Colonic mucosa (tissue), 4 donors: ENCODE measurements at regions of chr11 and their contacts with region 1.

Region 1: DNA sequence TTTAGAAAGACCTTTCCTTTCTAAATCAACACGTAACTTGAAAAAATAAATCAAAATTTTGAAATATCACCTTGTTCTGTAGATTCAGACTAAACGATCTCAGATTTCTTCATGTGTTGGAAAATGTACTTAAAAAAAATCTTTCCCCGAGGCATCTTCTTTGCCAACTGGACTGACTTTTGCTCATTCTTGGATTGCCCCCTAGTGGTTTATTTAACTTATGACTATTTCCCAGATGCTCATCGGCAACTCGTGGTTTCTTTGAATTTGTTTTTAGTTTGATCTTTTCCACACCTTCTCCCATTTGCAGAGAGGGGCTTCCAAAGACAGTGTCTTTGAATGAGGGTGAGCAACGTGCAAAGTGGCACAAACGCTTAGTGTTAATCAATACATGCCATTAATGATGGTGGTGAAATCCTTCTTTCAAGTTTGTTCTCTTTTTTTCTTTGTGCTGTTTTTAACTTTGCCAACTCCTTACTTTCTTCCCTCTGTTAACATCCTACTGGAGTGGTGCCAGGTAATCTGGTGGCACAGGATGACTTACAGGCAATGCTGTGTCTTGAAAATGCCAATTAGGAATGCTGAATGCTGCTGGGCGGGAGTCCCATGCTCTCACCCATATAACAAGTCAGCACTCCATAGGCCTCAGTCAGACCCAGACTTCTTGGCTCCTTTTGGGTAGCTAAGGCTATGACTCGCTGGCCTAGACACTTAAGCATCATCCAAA is 18.3 kb downstream of the PRSS23 start:
- DNase-seq: no peak
- H3K4me3 ChIP-seq: no peak overlapping the region
- H3K27ac ChIP-seq: no peak overlapping the region
- H3K4me1 ChIP-seq: no peaks in the 10 kb centered on the region
- H3K27me3 ChIP-seq: no peaks in the 10 kb centered on the region
- CTCF ChIP-seq: peak; percentile 66

Region 2: DNA sequence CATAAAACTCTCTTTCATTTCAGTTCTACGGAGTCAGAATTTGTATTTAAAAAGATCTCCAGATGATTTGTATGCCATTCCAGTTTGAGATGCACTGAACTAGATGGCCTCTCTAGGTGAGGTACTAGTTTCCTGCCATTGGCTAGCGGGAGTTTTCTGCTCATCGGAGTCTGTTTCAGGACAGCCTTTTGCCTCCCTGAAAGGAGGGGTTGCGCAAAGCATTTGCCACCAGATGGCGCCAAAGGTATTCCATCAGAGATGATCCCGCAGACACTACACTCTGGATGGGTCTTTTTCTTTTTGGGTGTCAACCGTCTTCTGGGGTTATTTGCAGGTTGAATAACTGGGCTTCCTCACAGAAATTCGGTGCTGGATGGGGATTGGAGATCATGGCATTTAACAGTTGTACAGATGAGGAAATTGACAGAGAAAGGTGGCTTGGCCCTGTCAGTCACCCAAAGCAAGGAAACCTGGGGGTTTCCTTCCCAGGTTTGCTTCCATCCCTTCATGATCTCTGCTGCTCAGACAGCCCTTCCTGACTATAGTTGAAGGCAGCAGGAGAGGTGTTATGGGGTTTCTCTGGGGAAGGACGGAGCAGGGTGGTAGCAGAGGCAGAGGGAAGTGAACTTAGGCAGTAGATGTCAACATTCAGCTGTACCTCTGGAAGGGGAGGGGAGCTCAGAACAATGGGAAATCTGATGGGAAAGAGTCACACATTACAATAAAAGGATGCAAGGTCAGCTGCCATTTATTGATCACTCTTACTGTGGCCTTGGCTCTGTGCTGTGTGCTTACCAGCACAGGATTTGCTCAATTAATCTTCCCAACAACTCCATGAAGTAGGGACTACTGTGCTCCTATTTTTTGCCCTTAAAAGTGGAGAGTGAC is 362.3 kb before region 1 on chr11:
- intact Hi-C with region 1: loop called (anchors 2 kb)
- DNase-seq: peak; percentile 89
- H3K4me3 ChIP-seq: no peak overlapping the region
- H3K27ac ChIP-seq: no peak overlapping the region
- H3K4me1 ChIP-seq: no peaks in the 10 kb centered on the region
- H3K27me3 ChIP-seq: no peaks in the 10 kb centered on the region
- CTCF ChIP-seq: peak; percentile 89

Region 3: DNA sequence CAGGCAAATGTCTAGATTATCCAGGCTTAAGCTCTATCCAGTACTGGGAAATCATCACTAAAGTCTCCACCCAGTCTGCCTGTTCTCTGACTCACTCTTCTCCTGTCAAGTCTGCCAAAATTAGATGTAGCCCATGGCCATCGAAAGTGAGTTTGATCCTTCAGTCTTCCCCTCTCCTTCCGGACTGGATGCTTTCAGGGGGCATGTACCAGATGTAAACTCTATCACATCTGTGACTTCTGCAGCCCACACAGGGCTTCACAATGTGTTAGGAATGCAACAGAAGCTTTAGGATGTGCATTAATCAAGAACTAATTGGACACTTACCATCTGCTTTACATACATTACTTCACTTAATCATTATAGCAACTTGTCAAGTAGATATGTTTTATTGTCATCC is 158.5 kb before region 1 on chr11:
- intact Hi-C with region 1: no loop called
- DNase-seq: no peak
- H3K4me3 ChIP-seq: no peak overlapping the region
- H3K27ac ChIP-seq: no peak overlapping the region
- H3K4me1 ChIP-seq: no peaks in the 10 kb centered on the region
- H3K27me3 ChIP-seq: no peaks in the 10 kb centered on the region
- CTCF ChIP-seq: no peak